ENCODE measurements at regions of chr9 and their contacts with region 1.

Region 1: DNA sequence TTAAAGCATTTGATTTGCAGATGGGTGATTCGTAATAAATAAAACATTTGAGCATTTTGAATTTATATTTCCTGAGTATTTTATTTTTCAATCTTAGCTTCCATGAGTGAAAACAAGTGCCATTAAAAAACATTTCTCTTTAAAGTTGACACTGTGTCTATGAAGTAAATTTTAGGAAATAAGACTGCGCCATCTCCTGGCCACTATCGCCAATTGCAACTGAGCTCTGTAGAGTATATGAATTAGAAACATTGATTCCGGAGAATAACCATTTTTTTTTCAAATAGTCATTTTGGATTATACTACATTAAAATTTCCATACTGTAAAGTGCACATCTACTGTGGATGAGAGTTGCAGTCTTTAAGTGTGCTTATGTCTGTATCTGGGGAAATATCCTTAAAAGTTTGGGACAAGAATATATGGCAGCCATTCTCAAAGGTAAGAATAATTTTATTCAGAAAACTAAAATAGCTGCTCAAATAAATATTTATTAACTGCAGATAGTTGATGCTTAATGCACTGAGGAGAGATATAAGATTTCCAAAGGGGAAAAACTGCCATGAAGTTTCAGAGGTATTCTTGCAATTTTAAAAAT is 5.9 kb downstream of the DMRTA1 start:
- DNase-seq: no peak
- ATAC-seq: no peak

Region 2: DNA sequence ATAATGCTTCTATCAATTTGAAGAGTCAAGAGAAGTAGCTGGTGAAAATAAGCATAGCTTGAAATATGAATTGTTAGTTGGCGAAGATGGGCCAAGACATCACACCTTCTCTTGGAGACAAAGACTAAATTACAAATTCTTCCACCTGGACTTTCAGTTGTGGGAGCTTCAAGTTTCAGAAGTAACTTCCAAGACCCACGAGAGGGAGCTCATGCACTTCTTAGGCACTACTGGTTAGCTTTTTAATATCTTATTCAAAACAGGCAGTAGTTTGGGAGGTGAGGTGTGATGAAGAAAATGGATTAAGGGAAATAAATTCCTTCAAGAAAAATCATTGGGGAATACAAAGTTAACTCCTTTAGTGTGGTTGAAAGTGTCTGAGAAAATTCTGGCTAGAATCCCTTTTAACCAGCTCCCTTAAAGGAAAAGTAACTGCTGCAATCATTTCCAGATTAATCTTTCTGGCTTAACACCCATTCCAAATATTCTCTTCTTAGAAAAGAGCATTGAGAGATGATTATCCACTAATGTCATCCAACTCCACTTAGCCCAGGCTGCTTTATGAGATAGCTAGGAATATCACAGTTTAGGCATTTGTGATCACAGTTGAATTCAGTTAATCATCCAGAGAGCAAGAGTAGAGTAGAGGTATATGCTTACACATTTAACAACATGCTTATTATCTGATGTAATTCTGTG is 145.4 kb before region 1 on chr9:
- intact Hi-C with region 1: loop called (anchors 1 kb)
- DNase-seq: no peak
- ATAC-seq: no peak

Region 3: GRCh38 chr9:22528485-22528884 is 76.0 kb after region 1 on chr9:
- intact Hi-C with region 1: no loop called
- DNase-seq: no peak
- ATAC-seq: no peak

Measured in Right ventricle myocardium inferior (tissue), 1 donor.